Calu3 (cell line): ENCODE measurements at regions of chr16 and their contacts with region 1.

Region 1: GRCh38 chr16:82699711-82700495 is 73.1 kb downstream of the CDH13 start:
- DNase-seq: no peak
- H3K4me3 Mint-ChIP-seq: no peak overlapping the region
- H3K27ac Mint-ChIP-seq: no peak overlapping the region
- H3K4me1 Mint-ChIP-seq: no peaks in the 10 kb centered on the region
- H3K27me3 Mint-ChIP-seq: peaks cover 30% of the 10 kb centered on the region
- CTCF ChIP-seq: no peak

Region 2: DNA sequence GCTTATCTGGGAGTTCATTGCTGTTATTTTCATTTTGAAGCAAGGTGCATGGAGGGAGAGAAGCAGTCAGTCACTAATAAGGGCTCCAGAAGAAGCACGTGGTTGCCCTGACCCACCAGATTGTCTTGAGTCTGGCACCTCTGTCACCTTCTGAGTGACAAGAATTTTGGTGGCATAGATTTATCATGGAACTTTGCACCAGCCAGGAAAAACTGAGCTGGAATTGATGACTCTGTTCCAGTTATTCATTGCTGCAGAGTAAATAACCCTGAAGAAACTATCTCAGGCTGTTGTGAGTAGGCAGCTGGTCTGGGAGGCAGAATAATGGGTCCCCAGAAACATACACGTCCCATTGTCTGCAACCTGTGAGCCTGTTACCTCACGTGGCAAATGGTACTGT is 620.0 kb before region 1 on chr16:
- CTCF ChIA-PET with region 1: interaction called, 11 read pairs
- intact Hi-C with region 1: no loop called
- DNase-seq: no peak
- H3K4me3 Mint-ChIP-seq: no peak overlapping the region
- H3K27ac Mint-ChIP-seq: no peak overlapping the region
- H3K4me1 Mint-ChIP-seq: peaks cover 37% of the 10 kb centered on the region
- H3K27me3 Mint-ChIP-seq: no peaks in the 10 kb centered on the region
- CTCF ChIP-seq: no peak

Region 3: DNA sequence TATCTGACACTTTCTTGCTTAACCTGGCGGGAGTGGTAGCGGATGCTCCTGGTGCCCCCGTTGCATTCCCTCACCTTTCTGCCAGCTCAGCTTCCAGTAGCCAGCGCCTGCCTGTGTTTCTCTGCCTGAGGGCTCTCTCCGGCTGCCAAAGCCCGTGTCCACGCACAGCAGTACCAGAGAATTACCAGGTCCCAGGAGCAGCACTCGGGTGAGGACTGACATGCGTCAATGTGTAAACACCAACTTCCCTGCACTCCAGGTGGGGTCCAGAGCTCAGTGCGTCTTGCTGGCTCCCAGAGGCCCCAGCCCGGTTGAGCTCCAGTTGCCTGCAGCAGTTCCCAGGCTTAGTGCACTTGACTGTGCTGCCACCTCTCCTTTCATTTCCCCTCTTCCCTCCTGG is 18.3 kb before region 1 on chr16:
- CTCF ChIA-PET with region 1: interaction called, 4 read pairs
- intact Hi-C with region 1: loop called (anchors 1 kb)
- DNase-seq: no peak
- H3K4me3 Mint-ChIP-seq: no peak overlapping the region
- H3K27ac Mint-ChIP-seq: no peak overlapping the region
- H3K4me1 Mint-ChIP-seq: no peaks in the 10 kb centered on the region
- H3K27me3 Mint-ChIP-seq: peaks cover 58% of the 10 kb centered on the region
- CTCF ChIP-seq: no peak